ENCODE measurements at regions of chr10 and their contacts with region 1.

Region 1: GRCh38 chr10:104300736-104301292 is 31.8 kb downstream of the GSTO2 start:
- DNase-seq: peak; percentile 93
- H3K4me3 ChIP-seq: peak overlapping the region; percentile 43
- CTCF ChIP-seq: no peak

Region 2: GRCh38 chr10:104284846-104285245 is 16.0 kb before region 1 on chr10:
- CTCF ChIA-PET with region 1: interaction called, 557 read pairs
- POLR2A ChIA-PET with region 1: no interaction called
- DNase-seq: no peak
- H3K4me3 ChIP-seq: no peak overlapping the region
- CTCF ChIP-seq: no peak

Region 3: DNA sequence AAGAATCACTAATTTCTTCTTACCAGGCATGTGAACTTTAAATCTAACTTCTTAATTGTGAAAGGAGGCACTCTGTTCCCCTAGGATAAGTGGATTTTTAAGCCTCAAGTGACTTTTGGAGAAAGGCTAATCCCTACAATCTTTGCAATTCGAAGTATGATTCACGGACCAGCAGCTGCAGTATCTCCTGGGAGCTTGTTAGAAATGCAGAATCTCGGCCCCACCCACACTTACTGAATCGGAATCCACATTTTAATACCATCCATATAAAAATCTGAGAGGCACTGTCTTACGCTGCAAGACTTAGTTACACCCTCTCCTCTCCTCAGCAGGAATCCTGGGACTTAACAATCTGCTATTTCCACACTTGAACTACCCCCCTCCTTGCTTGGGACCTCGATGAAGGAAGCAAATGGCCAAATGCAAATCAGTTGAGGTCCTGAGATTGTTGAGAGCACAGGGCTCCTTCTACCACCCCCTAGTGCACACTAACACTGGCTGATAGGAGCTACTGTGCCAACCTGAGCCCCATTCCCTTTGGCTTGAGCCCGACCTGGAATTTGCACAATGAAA is 16.5 kb after region 1 on chr10:
- CTCF ChIA-PET with region 1: interaction called, 234 read pairs
- POLR2A ChIA-PET with region 1: interaction called, 3 read pairs
- DNase-seq: no peak
- H3K4me3 ChIP-seq: no peak overlapping the region
- CTCF ChIP-seq: no peak

Region 4: DNA sequence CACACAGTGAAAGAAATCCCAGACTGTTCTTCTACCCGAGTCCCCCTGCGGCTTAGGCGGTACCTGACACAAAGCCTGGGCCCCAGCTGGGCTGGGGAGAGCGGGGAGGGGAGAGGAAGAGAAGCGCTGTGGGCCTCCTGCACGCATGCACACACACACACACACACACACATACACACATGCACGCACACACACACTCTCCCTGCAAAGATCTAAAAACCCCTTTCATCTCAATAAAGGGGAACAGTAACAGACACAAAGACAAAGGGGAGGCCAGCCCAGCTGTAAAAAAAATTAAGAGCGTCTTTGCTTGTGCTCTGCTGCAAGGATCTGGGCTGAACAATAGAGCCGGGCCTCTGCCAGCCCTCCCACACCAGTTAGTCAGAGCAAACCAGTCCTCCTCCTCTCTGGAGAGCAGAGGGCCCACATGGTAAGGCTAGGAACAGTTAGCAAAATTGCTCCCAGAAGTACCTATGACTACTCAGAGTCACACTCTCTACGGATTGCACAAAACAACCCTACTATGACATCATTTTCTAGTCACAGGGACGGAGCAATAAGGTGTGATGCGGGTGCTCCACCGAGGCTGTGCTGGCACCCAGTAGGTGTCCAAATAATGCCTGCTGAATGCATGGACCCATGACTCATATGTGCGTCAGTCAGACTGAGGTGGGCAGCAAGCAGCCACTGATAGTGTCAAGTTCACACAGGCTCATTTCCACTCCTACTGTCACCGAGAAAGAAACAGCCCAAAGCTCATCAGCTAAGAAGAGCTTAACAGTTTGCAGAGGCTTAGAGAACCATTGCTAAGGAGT is 28.3 kb after region 1 on chr10:
- CTCF ChIA-PET with region 1: interaction called, 122 read pairs
- POLR2A ChIA-PET with region 1: interaction called, 21 read pairs
- DNase-seq: no peak
- H3K4me3 ChIP-seq: peak overlapping the region; percentile 47
- CTCF ChIP-seq: no peak

Region 5: GRCh38 chr10:104337974-104338735 is 37.3 kb after region 1 on chr10 and contains the start of gene ITPRIP:
- CTCF ChIA-PET with region 1: interaction called, 45 read pairs
- POLR2A ChIA-PET with region 1: interaction called, 6 read pairs
- DNase-seq: no peak
- H3K4me3 ChIP-seq: peak within 1 kb of the TSS; percentile 85
- CTCF ChIP-seq: peak; percentile 28

Measured in AG04449 (cell line).